Adrenal gland (tissue), 19 donors: ENCODE measurements at regions of chr12 and their contacts with region 1.

Region 1: GRCh38 chr12:6335451-6336078 is 6.3 kb downstream of the TNFRSF1A start:
- DNase-seq: peak; percentile 70 to 94 (median 92)
- H3K4me3 ChIP-seq: peak overlapping the region in 2 of 4 donors; percentile 16 to 93
- H3K27ac ChIP-seq: peak overlapping the region; percentile 90 to 98 (median 97)
- H3K4me1 ChIP-seq: peaks cover 50 to 80% of the 10 kb centered on the region in 2 donors
- H3K27me3 ChIP-seq: no peaks in the 10 kb centered on the region
- CTCF ChIP-seq: peak in 5 of 6 experiments; percentile 36 to 63 (median 56)
- POLR2A ChIP-seq: peak; percentile 60 to 69

Region 2: GRCh38 chr12:6312529-6313325 is 22.8 kb before region 1 on chr12:
- intact Hi-C with region 1: no loop called
- DNase-seq: peak in 2 of 7 donors; percentile 37 to 50
- H3K4me3 ChIP-seq: no peak overlapping the region
- H3K27ac ChIP-seq: peak overlapping the region in 1 of 5 donors; percentile 55
- H3K4me1 ChIP-seq: peaks cover 9% of the 10 kb centered on the region in 2 donors
- H3K27me3 ChIP-seq: peaks cover 6% of the 10 kb centered on the region
- CTCF ChIP-seq: no peak
- POLR2A ChIP-seq: no peak

Region 3: GRCh38 chr12:6383572-6384498 is 48.3 kb after region 1 on chr12 and contains the start of gene LTBR:
- intact Hi-C with region 1: loop called in 1 of 2 experiments (anchors 5 kb)
- DNase-seq: peak; percentile 95 to 98 (median 98)
- H3K4me3 ChIP-seq: peak within 1 kb of the TSS; percentile 31 to 88 (median 62)
- H3K27ac ChIP-seq: peak within 1 kb of the TSS; percentile 83 to 97 (median 95)
- H3K4me1 ChIP-seq: peaks cover 19 to 41% of the 10 kb centered on the region in 2 donors
- H3K27me3 ChIP-seq: no peaks in the 10 kb centered on the region
- CTCF ChIP-seq: peak in 1 of 6 experiments; percentile 17
- POLR2A ChIP-seq: peak; percentile 68 to 77
- total RNA-seq, gene LTBR: 34.6 to 295 (median 158) TPM

Region 4: GRCh38 chr12:6451348-6452244 is 116.0 kb after region 1 on chr12 and contains the start of gene TAPBPL:
- intact Hi-C with region 1: no loop called
- DNase-seq: peak; percentile 84 to 95 (median 90)
- H3K4me3 ChIP-seq: peak within 1 kb of the TSS; percentile 59 to 88 (median 84)
- H3K27ac ChIP-seq: peak within 1 kb of the TSS; percentile 92 to 98 (median 95)
- H3K4me1 ChIP-seq: peaks cover 21 to 23% of the 10 kb centered on the region in 2 donors
- H3K27me3 ChIP-seq: no peaks in the 10 kb centered on the region
- CTCF ChIP-seq: no peak
- POLR2A ChIP-seq: peak; percentile 49 to 75
- total RNA-seq, gene TAPBPL: 17.0 to 42.4 (median 33.8) TPM

Region 5: GRCh38 chr12:6465467-6466183 is 130.1 kb after region 1 on chr12:
- intact Hi-C with region 1: loop called in 1 of 2 experiments (anchors 5 kb)
- DNase-seq: peak; percentile 44 to 78 (median 59)
- H3K4me3 ChIP-seq: no peak overlapping the region
- H3K27ac ChIP-seq: no peak overlapping the region
- H3K4me1 ChIP-seq: peaks cover 15 to 22% of the 10 kb centered on the region in 2 donors
- H3K27me3 ChIP-seq: no peaks in the 10 kb centered on the region
- CTCF ChIP-seq: peak; percentile 80 to 98 (median 90)
- POLR2A ChIP-seq: no peak

Region 6: GRCh38 chr12:6533923-6534694 is 198.5 kb after region 1 on chr12 and contains the start of gene GAPDH:
- intact Hi-C with region 1: loop called in 1 of 2 experiments (anchors 10 kb)
- DNase-seq: peak; percentile 93 to 97 (median 95)
- H3K4me3 ChIP-seq: peak within 1 kb of the TSS; percentile 52 to 90 (median 78)
- H3K27ac ChIP-seq: peak within 1 kb of the TSS; percentile 90 to 99 (median 95)
- H3K4me1 ChIP-seq: peaks cover 38 to 45% of the 10 kb centered on the region in 2 donors
- H3K27me3 ChIP-seq: no peaks in the 10 kb centered on the region
- CTCF ChIP-seq: peak in 1 of 6 experiments; percentile 20
- POLR2A ChIP-seq: peak; percentile 97 to 98
- total RNA-seq, gene GAPDH: 1,734 to 3,241 (median 2,275) TPM